CD8-positive, alpha-beta T cell (primary cell): ENCODE measurements at regions of chr6 and their contacts with region 1.

Region 1: DNA sequence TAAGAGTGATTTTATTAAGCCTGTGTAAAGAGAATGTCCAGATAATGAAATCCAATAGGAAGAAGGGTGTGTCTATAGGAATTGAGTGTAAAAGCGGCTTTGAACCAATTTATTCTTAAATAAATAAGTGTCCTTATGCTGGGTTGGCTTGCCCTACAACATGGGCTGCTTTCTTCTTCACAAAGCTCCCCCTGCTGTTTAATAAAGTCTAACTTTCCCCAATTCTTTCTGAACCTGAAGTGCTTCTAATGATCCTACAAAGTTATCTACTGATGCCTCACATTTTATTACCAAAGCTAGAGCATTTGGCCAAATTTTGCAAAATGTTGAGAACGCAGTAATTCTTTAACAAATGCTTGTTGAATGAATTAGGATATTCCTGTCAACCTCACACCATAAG is 36.3 kb upstream of the SIRT5 start:
- DNase-seq: peak in 2 of 9 experiments; percentile 52 to 66
- ATAC-seq: peak; percentile 36
- H3K4me3 ChIP-seq: no peak overlapping the region
- H3K4me3 Mint-ChIP-seq: no peak overlapping the region
- H3K27ac ChIP-seq: no peak overlapping the region
- H3K27ac Mint-ChIP-seq: no peak overlapping the region
- H3K4me1 ChIP-seq: no peaks in the 10 kb centered on the region
- H3K4me1 Mint-ChIP-seq: no peaks in the 10 kb centered on the region
- H3K27me3 ChIP-seq: no peaks in the 10 kb centered on the region
- H3K27me3 Mint-ChIP-seq: no peaks in the 10 kb centered on the region
- CTCF ChIP-seq: peak; percentile 44

Region 2: GRCh38 chr6:13413900-13414555 is 124.1 kb before region 1 on chr6:
- CTCF ChIA-PET with region 1: no interaction called
- POLR2A ChIA-PET with region 1: no interaction called
- intact Hi-C with region 1: loop called in 1 of 2 experiments (anchors 10 kb)
- DNase-seq: peak in 4 of 9 experiments; percentile 21 to 67 (median 38)
- ATAC-seq: peak; percentile 54
- H3K4me3 ChIP-seq: no peak overlapping the region
- H3K4me3 Mint-ChIP-seq: no peak overlapping the region
- H3K27ac ChIP-seq: peak overlapping the region in 1 of 2 experiments; percentile 48
- H3K27ac Mint-ChIP-seq: no peak overlapping the region
- H3K4me1 ChIP-seq: no peaks in the 10 kb centered on the region
- H3K4me1 Mint-ChIP-seq: peaks cover under 1% of the 10 kb centered on the region
- H3K27me3 ChIP-seq: no peaks in the 10 kb centered on the region
- H3K27me3 Mint-ChIP-seq: no peaks in the 10 kb centered on the region
- CTCF ChIP-seq: no peak

Region 3: GRCh38 chr6:13526727-13527670 is 11.1 kb before region 1 on chr6:
- CTCF ChIA-PET with region 1: interaction called, 7 read pairs
- POLR2A ChIA-PET with region 1: no interaction called
- intact Hi-C with region 1: loop called in 1 of 2 experiments (anchors 1 kb)
- DNase-seq: peak in 8 of 9 experiments; percentile 19 to 77 (median 50)
- ATAC-seq: peak; percentile 94
- H3K4me3 ChIP-seq: no peak overlapping the region
- H3K4me3 Mint-ChIP-seq: no peak overlapping the region
- H3K27ac ChIP-seq: no peak overlapping the region
- H3K27ac Mint-ChIP-seq: peak overlapping the region; percentile 25
- H3K4me1 ChIP-seq: peaks cover 16% of the 10 kb centered on the region
- H3K4me1 Mint-ChIP-seq: peaks cover 20% of the 10 kb centered on the region
- H3K27me3 ChIP-seq: no peaks in the 10 kb centered on the region
- H3K27me3 Mint-ChIP-seq: no peaks in the 10 kb centered on the region
- CTCF ChIP-seq: no peak

Region 4: GRCh38 chr6:13586603-13587542 is 48.8 kb after region 1 on chr6:
- CTCF ChIA-PET with region 1: no interaction called
- POLR2A ChIA-PET with region 1: no interaction called
- intact Hi-C with region 1: no loop called
- DNase-seq: no peak
- ATAC-seq: no peak
- H3K4me3 ChIP-seq: no peak overlapping the region
- H3K4me3 Mint-ChIP-seq: no peak overlapping the region
- H3K27ac ChIP-seq: no peak overlapping the region
- H3K27ac Mint-ChIP-seq: no peak overlapping the region
- H3K4me1 ChIP-seq: no peaks in the 10 kb centered on the region
- H3K4me1 Mint-ChIP-seq: no peaks in the 10 kb centered on the region
- H3K27me3 ChIP-seq: no peaks in the 10 kb centered on the region
- H3K27me3 Mint-ChIP-seq: no peaks in the 10 kb centered on the region
- CTCF ChIP-seq: no peak

Region 5: DNA sequence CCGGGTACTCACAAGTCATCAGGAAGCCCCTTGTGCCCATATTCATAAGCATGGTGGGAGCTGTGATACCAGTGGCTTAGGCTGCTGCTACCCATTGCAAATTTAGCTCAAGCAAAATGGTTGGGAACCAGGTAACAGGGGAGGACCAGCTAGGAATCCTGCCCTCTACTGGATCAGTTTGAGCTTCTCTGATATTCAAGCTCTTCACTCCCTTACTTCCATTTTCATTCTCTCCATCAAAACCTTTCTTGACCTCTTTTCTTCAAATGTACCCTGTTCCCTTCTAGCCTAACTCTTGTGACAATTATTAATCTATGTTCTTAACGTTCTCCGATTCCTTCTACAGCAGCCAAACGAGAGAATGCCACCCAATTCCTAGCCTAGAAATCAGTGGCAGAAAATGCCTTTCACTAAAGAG is 86.8 kb after region 1 on chr6:
- CTCF ChIA-PET with region 1: no interaction called
- POLR2A ChIA-PET with region 1: no interaction called
- intact Hi-C with region 1: no loop called
- DNase-seq: peak in 3 of 9 experiments; percentile 26 to 70 (median 58)
- ATAC-seq: peak; percentile 90
- H3K4me3 ChIP-seq: no peak overlapping the region
- H3K4me3 Mint-ChIP-seq: no peak overlapping the region
- H3K27ac ChIP-seq: no peak overlapping the region
- H3K27ac Mint-ChIP-seq: peak overlapping the region; percentile 72
- H3K4me1 ChIP-seq: no peaks in the 10 kb centered on the region
- H3K4me1 Mint-ChIP-seq: peaks cover 16% of the 10 kb centered on the region
- H3K27me3 ChIP-seq: no peaks in the 10 kb centered on the region
- H3K27me3 Mint-ChIP-seq: no peaks in the 10 kb centered on the region
- CTCF ChIP-seq: no peak